Activated CD4-positive, alpha-beta T cell treated with anti-CD3 and anti-CD28 coated beads for 36 hours (primary cell): ENCODE measurements at regions of chr11 and their contacts with region 1.

Region 1: GRCh38 chr11:68839054-68839865 is 2.5 kb downstream of the CPT1A start:
- DNase-seq: peak; percentile 97
- ATAC-seq: peak; percentile 57
- H3K4me3 Mint-ChIP-seq: peak overlapping the region; percentile 81
- H3K27ac Mint-ChIP-seq: peak overlapping the region; percentile 86
- H3K4me1 Mint-ChIP-seq: peaks cover 50% of the 10 kb centered on the region
- H3K27me3 Mint-ChIP-seq: no peaks in the 10 kb centered on the region

Region 2: GRCh38 chr11:68213555-68214174 is 625.6 kb before region 1 on chr11:
- CTCF ChIA-PET with region 1: no interaction called
- POLR2A ChIA-PET with region 1: no interaction called
- intact Hi-C with region 1: loop called in 1 of 2 experiments (anchors 5 kb)
- DNase-seq: peak; percentile 87
- ATAC-seq: peak; percentile 41
- H3K4me3 Mint-ChIP-seq: peak overlapping the region; percentile 71
- H3K27ac Mint-ChIP-seq: no peak overlapping the region
- H3K4me1 Mint-ChIP-seq: peaks cover 47% of the 10 kb centered on the region
- H3K27me3 Mint-ChIP-seq: peaks cover 2% of the 10 kb centered on the region

Region 3: GRCh38 chr11:68398995-68399851 is 440.0 kb before region 1 on chr11:
- CTCF ChIA-PET with region 1: no interaction called
- POLR2A ChIA-PET with region 1: no interaction called
- intact Hi-C with region 1: no loop called
- DNase-seq: no peak
- ATAC-seq: no peak
- H3K4me3 Mint-ChIP-seq: no peak overlapping the region
- H3K27ac Mint-ChIP-seq: no peak overlapping the region
- H3K4me1 Mint-ChIP-seq: no peaks in the 10 kb centered on the region
- H3K27me3 Mint-ChIP-seq: no peaks in the 10 kb centered on the region

Region 4: GRCh38 chr11:68459886-68460740 is 379.1 kb before region 1 on chr11:
- CTCF ChIA-PET with region 1: no interaction called
- POLR2A ChIA-PET with region 1: no interaction called
- intact Hi-C with region 1: loop called in 1 of 2 experiments (anchors 1 kb)
- DNase-seq: peak; percentile 97
- ATAC-seq: peak; percentile 93
- H3K4me3 Mint-ChIP-seq: peak overlapping the region; percentile 86
- H3K27ac Mint-ChIP-seq: peak overlapping the region; percentile 89
- H3K4me1 Mint-ChIP-seq: peaks cover 31% of the 10 kb centered on the region
- H3K27me3 Mint-ChIP-seq: no peaks in the 10 kb centered on the region

Region 5: DNA sequence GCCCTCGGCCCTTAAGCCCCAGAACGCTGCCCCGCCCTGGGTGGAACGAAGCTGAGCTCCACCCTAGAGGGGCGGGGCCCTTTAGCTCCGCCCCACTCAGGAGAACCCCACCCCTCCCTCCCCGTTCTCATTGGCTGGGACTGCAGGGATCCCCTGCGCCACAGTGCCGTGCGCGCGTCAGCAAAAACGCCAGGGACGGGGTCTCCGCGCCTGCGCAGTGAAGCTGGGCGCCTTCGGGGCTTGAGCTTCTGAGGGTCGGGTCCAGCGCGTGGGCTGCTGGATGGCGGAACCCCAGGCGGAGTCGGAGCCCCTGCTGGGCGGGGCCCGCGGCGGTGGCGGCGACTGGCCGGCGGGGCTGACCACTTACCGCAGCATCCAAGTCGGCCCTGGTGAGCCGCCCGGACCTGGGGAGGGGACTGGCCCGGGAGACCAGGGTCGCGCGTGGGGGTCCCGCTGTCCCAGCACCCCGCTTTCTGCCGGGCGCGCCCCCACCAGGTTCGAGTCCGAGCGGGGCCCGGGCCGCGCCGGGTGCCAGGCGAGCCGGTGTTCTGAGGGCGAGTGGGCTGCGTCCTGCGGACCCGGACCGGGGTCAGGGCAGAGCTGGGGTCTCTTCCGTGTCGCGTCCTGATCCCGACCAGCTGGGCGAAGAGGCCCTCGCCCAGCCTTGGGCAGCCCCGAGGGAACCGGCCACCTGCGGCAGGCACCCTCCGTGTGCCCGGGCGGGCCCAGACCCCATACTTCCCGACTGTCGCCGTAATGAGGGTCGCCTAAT is 209.6 kb after region 1 on chr11 and contains the start of gene TPCN2:
- CTCF ChIA-PET with region 1: no interaction called
- POLR2A ChIA-PET with region 1: no interaction called
- intact Hi-C with region 1: loop called in 1 of 2 experiments (anchors 1 kb)
- DNase-seq: peak; percentile 94
- ATAC-seq: peak; percentile 99
- H3K4me3 Mint-ChIP-seq: peak within 1 kb of the TSS; percentile 72
- H3K27ac Mint-ChIP-seq: peak within 1 kb of the TSS; percentile 73
- H3K4me1 Mint-ChIP-seq: peaks cover 22% of the 10 kb centered on the region
- H3K27me3 Mint-ChIP-seq: peaks cover 2% of the 10 kb centered on the region
- total RNA-seq, gene TPCN2: 7.4 to 10.4 TPM

Region 6: DNA sequence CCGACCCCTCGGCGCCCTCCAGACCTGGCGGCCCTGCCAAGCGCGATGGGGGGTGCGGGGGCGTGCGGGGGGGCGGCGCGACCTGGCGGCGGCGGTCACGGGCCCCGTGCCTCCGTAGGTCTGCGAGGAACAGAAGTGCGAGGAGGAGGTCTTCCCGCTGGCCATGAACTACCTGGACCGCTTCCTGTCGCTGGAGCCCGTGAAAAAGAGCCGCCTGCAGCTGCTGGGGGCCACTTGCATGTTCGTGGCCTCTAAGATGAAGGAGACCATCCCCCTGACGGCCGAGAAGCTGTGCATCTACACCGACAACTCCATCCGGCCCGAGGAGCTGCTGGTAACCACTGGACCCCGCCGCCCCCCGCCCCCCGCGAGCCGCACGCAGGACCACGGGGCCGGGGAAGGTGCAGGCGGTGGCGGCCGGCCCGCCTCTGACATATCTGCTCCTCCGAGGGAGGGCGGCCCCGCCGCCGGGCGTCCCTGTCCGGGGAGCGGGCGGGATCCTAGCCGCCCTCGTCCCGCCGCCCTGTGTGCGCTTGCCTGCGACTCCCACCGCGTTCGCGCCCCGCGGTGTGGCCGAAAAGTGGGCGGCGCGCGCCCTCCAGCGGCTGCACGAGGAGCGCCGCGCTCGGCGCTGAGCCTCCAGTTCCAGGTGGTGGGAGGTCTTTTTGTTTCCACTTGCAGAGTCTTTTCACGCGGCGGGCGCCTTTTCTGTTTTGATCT is 803.8 kb after region 1 on chr11:
- CTCF ChIA-PET with region 1: no interaction called
- POLR2A ChIA-PET with region 1: no interaction called
- intact Hi-C with region 1: loop called in 1 of 2 experiments (anchors 2 kb)
- DNase-seq: peak; percentile 86
- ATAC-seq: peak; percentile 80
- H3K4me3 Mint-ChIP-seq: peak overlapping the region; percentile 51
- H3K27ac Mint-ChIP-seq: no peak overlapping the region
- H3K4me1 Mint-ChIP-seq: peaks cover 18% of the 10 kb centered on the region
- H3K27me3 Mint-ChIP-seq: peaks cover 23% of the 10 kb centered on the region

Region 7: GRCh38 chr11:70270104-70270876 is 1431.0 kb after region 1 on chr11 and contains the start of gene PPFIA1:
- CTCF ChIA-PET with region 1: no interaction called
- POLR2A ChIA-PET with region 1: no interaction called
- intact Hi-C with region 1: loop called in 1 of 2 experiments (anchors 2 kb)
- DNase-seq: peak; percentile 97
- ATAC-seq: peak; percentile 95
- H3K4me3 Mint-ChIP-seq: peak within 1 kb of the TSS; percentile 92
- H3K27ac Mint-ChIP-seq: peak within 1 kb of the TSS; percentile 89
- H3K4me1 Mint-ChIP-seq: peaks cover 31% of the 10 kb centered on the region
- H3K27me3 Mint-ChIP-seq: peaks cover 10% of the 10 kb centered on the region
- total RNA-seq, gene PPFIA1: 26.5 to 40.5 TPM